Caco-2 (cell line): ENCODE measurements at regions of chr17 and their contacts with region 1.

Region 1: DNA sequence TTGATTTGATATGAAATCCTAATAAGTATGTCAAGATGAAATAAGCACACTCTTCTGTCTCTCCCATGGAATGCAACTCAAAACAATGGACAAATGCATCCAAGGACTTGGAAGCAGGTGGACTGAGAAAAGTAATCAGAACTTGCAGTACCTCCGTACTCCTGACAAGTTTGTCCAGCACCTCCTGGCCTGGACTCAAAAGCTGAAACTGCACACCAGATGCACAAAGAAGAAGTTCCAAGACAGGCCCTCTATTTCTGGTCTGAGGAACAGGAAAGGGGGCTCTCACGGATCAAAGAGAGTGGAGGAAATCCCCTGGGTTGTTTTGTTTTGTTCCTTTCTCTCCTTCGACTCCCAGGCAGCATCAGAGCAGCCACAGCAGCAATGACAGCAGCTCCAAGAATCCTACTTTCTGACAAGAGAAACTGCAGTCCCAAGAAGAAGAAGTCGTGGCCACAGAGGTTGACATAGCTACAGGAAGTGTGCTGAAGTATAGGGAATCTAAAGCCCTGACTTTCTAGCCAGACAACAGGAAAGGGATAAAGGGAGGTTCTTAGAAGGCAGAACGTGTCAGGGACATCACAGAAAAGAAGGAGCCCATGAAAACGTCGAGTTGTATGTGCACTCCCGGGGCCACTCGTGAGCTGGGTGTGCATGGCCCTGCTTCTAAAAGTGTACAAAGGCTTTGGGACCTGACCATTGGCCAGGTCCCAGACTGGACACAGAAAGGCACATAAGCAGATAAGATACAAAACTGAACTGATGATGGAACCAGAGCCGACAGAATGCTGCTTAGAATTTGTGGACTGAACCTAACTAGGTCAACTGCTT is 29.3 kb downstream of the AKAP10 start:
- DNase-seq: no peak
- H3K4me3 ChIP-seq: no peak overlapping the region
- H3K4me3 Mint-ChIP-seq: no peak overlapping the region
- H3K27ac Mint-ChIP-seq: no peak overlapping the region
- H3K4me1 ChIP-seq: no peaks in the 10 kb centered on the region
- H3K4me1 Mint-ChIP-seq: peaks cover 26% of the 10 kb centered on the region
- H3K27me3 ChIP-seq: no peaks in the 10 kb centered on the region
- H3K27me3 Mint-ChIP-seq: no peaks in the 10 kb centered on the region
- CTCF ChIP-seq: no peak

Region 2: GRCh38 chr17:19904924-19905323 is 43.4 kb before region 1 on chr17:
- CTCF ChIA-PET with region 1: no interaction called
- POLR2A ChIA-PET with region 1: no interaction called
- intact Hi-C with region 1: loop called (anchors 1 kb)
- DNase-seq: no peak
- H3K4me3 ChIP-seq: no peak overlapping the region
- H3K4me3 Mint-ChIP-seq: no peak overlapping the region
- H3K27ac Mint-ChIP-seq: no peak overlapping the region
- H3K4me1 ChIP-seq: no peaks in the 10 kb centered on the region
- H3K4me1 Mint-ChIP-seq: peaks cover 6% of the 10 kb centered on the region
- H3K27me3 ChIP-seq: no peaks in the 10 kb centered on the region; the same call in 1 of the 2 replicates
- H3K27me3 Mint-ChIP-seq: no peaks in the 10 kb centered on the region
- CTCF ChIP-seq: no peak

Region 3: GRCh38 chr17:20026960-20027359 is 78.6 kb after region 1 on chr17:
- CTCF ChIA-PET with region 1: no interaction called
- POLR2A ChIA-PET with region 1: no interaction called
- intact Hi-C with region 1: no loop called
- DNase-seq: no peak
- H3K4me3 ChIP-seq: no peak overlapping the region
- H3K4me3 Mint-ChIP-seq: no peak overlapping the region
- H3K27ac Mint-ChIP-seq: no peak overlapping the region
- H3K4me1 ChIP-seq: no peaks in the 10 kb centered on the region
- H3K4me1 Mint-ChIP-seq: no peaks in the 10 kb centered on the region
- H3K27me3 ChIP-seq: no peaks in the 10 kb centered on the region
- H3K27me3 Mint-ChIP-seq: peaks cover 23% of the 10 kb centered on the region
- CTCF ChIP-seq: no peak